K562 (cell line): ENCODE measurements at regions of chr9 and their contacts with region 1.

Region 1: DNA sequence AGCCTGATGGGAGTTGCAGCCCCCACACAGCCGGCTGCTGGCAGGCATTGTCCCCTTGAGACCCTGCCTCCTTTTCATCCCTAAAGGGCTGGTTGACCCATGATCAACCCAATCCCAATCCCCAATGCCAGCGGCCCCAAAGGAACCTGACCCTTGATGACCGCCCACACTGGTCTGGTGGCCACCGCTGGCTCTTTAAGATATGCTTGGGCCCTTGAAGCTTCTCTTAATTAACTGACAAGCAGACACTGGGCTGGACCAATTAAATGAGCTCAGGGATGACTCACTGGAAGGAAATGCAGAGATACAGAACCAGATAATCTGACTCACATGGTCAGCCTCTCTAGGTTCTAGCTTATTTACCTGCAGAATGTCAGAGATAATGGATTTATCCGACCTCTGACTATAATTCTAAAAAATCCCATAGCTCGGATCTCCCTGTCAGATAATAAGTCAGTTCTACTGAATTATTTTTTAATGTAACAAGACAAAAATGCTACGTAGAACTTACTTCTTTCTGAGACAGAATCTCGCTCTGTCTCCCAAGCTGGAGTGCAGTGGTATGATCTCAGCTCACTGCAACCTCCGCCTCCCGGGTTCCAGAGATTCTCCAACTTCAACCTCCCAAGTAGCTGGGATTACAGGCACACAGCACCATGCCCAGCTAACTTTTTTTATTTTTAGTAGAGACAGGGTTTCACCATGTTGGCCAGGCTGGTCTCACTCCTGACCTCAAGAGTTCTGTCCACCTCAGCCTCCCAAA is 11.1 kb upstream of the MLANA start:
- DNase-seq: peak; percentile 47 to 92 (median 66)
- ATAC-seq: peak; percentile 94
- H3K4me3 ChIP-seq: no peak overlapping the region
- H3K27ac ChIP-seq: peak overlapping the region; percentile 73
- H3K4me1 ChIP-seq: peaks cover 20 to 25% of the 10 kb centered on the region in 2 experiments; a peak in 4 of 5 replicates
- H3K27me3 ChIP-seq: no peaks in the 10 kb centered on the region
- CTCF ChIP-seq: no peak
- EP300 ChIP-seq: peak; percentile 90
- POLR2A ChIP-seq: no peak; the same call in 1 of the 2 replicates
- RAD21 ChIP-seq: no peak

Region 2: DNA sequence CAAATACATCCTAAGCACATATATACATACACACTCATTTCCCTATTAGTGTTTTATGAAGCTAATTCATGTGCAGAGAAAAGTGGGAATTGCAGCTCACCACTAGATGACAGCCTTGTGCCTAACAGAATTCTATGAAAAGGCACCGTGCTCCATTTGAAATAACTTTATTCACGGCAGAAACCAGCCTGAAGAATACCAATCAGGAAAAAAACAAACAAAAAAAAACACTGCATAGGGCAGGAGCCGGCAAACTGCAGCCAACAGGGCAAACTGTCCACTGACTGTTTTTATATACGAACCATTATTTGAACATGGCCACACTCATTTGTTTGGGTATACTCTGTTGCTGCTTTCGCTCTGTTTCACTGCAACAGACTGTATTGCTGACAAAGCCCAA is 80.3 kb before region 1 on chr9:
- CTCF ChIA-PET with region 1: no interaction called
- POLR2A ChIA-PET with region 1: no interaction called
- in situ Hi-C with region 1: no loop called
- intact Hi-C with region 1: loop called (anchors 5 kb)
- DNase-seq: peak in 2 of 4 experiments; percentile 11 to 43
- ATAC-seq: peak; percentile 76
- H3K4me3 ChIP-seq: no peak overlapping the region
- H3K27ac ChIP-seq: no peak overlapping the region
- H3K4me1 ChIP-seq: no peaks in the 10 kb centered on the region
- H3K27me3 ChIP-seq: no peaks in the 10 kb centered on the region
- CTCF ChIP-seq: peak; percentile 51 to 86 (median 66)
- EP300 ChIP-seq: no peak
- POLR2A ChIP-seq: no peak
- RAD21 ChIP-seq: peak; percentile 70 to 85

Region 3: DNA sequence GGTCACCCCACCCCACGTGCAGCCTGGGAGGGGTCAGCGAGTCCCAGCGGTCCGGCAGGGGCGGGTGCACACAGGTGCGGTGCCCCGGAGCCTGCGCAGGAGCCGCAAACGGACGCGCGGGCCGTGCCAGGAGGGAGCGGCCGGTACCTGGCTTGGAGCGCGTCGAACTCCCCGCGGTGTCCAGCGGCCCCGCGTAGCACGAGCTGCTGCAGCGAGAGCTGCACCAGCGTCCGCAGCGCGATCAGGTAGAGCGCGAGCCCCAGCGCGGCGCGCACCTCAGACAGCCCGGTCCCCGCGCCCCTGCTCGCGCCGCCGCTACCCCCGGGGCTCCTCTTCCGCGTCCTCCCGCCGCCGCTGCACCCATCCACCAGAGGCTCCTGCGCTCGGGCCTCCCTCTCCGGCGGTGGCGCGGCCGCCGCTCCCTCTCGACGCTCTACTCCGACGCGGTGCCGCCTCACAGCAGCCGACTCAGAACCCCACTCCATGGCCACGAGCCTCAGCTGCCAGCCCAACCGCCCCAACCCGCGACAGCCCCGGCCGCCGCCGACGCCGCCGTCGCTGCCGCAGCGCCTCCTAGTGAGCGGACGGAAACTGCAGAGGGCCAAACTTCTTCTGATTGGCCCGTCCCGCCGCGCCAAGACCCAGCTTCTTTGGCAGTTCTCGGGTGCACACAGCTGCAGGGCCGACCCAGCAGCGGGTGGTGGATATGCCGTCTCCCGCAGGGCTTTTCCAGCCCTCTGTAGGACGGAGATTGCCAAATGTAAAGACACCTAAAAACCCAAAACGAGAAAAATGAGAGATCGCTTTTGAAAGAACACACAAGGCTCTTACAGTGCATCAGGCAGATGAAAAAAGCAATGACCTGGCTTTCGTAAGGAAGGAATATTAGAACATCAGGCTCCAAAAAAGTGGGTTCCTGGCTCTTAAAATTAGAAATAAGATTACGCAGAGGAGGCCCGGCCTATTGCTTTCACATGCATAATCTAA is 46.8 kb before region 1 on chr9 and contains the start of gene ERMP1:
- CTCF ChIA-PET with region 1: interaction called, 3 read pairs
- POLR2A ChIA-PET with region 1: interaction called, 3 read pairs
- in situ Hi-C with region 1: no loop called
- intact Hi-C with region 1: loop called (anchors 5 kb)
- DNase-seq: peak; percentile 67 to 85 (median 73)
- ATAC-seq: peak; percentile 93
- H3K4me3 ChIP-seq: peak within 1 kb of the TSS; percentile 78
- H3K27ac ChIP-seq: peak within 1 kb of the TSS; percentile 77
- H3K4me1 ChIP-seq: peaks cover 10 to 11% of the 10 kb centered on the region in 2 experiments; a peak in 4 of 5 replicates
- H3K27me3 ChIP-seq: no peaks in the 10 kb centered on the region
- CTCF ChIP-seq: peak; percentile 73 to 82 (median 82)
- EP300 ChIP-seq: no peak
- POLR2A ChIP-seq: peak; percentile 78
- RAD21 ChIP-seq: peak; percentile 44 to 49
- polyA plus RNA-seq, gene ERMP1: 2.5 to 4.6 TPM

Region 4: GRCh38 chr9:6049798-6050197 is 170.2 kb after region 1 on chr9:
- CTCF ChIA-PET with region 1: no interaction called
- POLR2A ChIA-PET with region 1: no interaction called
- in situ Hi-C with region 1: loop called (anchors 5 kb)
- intact Hi-C with region 1: no loop called
- DNase-seq: peak; percentile 11 to 54 (median 17)
- ATAC-seq: peak; percentile 77
- H3K4me3 ChIP-seq: no peak overlapping the region
- H3K27ac ChIP-seq: no peak overlapping the region
- H3K4me1 ChIP-seq: no peaks in the 10 kb centered on the region
- H3K27me3 ChIP-seq: peaks cover 0 to 17% of the 10 kb centered on the region in 2 experiments; a peak in 2 of 5 replicates
- CTCF ChIP-seq: peak; percentile 53 to 59 (median 55)
- EP300 ChIP-seq: no peak
- POLR2A ChIP-seq: no peak
- RAD21 ChIP-seq: peak in 1 of 2 experiments; percentile 69; a peak in 2 of 4 replicates